ENCODE measurements at regions of chr5 and their contacts with region 1.

Region 1: GRCh38 chr5:40428126-40428525 is 251.6 kb upstream of the PTGER4 start:
- DNase-seq: peak; percentile 43
- H3K4me3 Mint-ChIP-seq: no peak overlapping the region
- H3K27ac Mint-ChIP-seq: peak overlapping the region; percentile 84
- H3K4me1 Mint-ChIP-seq: peaks cover 44% of the 10 kb centered on the region
- H3K27me3 Mint-ChIP-seq: no peaks in the 10 kb centered on the region

Region 2: GRCh38 chr5:39863926-39864552 is 564.1 kb before region 1 on chr5:
- CTCF ChIA-PET with region 1: no interaction called
- POLR2A ChIA-PET with region 1: no interaction called
- DNase-seq: no peak
- H3K4me3 Mint-ChIP-seq: no peak overlapping the region
- H3K27ac Mint-ChIP-seq: no peak overlapping the region
- H3K4me1 Mint-ChIP-seq: no peaks in the 10 kb centered on the region
- H3K27me3 Mint-ChIP-seq: peaks cover 4% of the 10 kb centered on the region

Region 3: DNA sequence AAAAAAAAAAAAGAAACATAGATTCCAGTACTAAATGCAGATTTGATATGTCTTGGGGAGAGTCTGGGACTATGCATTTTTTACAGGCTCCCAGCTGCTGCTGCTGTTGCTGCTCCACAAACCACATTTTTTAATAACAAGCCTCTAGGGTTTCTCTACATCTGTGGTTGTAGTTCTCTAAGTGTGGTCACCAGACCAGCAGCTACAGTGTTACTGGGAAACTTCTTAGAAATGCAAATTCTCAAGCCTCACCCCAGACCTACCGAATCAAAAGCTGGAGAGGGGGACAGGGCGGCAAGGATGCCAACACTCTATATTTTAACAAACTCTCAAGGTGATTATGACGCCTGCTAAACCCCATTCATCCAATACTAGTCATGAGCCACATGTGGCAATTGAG is 41.8 kb before region 1 on chr5:
- CTCF ChIA-PET with region 1: interaction called, 7 read pairs
- POLR2A ChIA-PET with region 1: interaction called, 23 read pairs
- DNase-seq: peak; percentile 52
- H3K4me3 Mint-ChIP-seq: no peak overlapping the region
- H3K27ac Mint-ChIP-seq: peak overlapping the region; percentile 53
- H3K4me1 Mint-ChIP-seq: peaks cover 87% of the 10 kb centered on the region
- H3K27me3 Mint-ChIP-seq: no peaks in the 10 kb centered on the region

Region 4: GRCh38 chr5:40627706-40628105 is 199.6 kb after region 1 on chr5:
- CTCF ChIA-PET with region 1: no interaction called
- POLR2A ChIA-PET with region 1: no interaction called
- DNase-seq: no peak
- H3K4me3 Mint-ChIP-seq: no peak overlapping the region
- H3K27ac Mint-ChIP-seq: no peak overlapping the region
- H3K4me1 Mint-ChIP-seq: peaks cover 9% of the 10 kb centered on the region
- H3K27me3 Mint-ChIP-seq: no peaks in the 10 kb centered on the region

Measured in activated CD4-positive, alpha-beta memory T cell treated with anti-CD3 and anti-CD28 coated beads, Interleukin-2, amount 10 ng/mL, durations not matched to agents 7 days and 5 days (primary cell).